ENCODE measurements at regions of chr14 and their contacts with region 1.

Region 1: DNA sequence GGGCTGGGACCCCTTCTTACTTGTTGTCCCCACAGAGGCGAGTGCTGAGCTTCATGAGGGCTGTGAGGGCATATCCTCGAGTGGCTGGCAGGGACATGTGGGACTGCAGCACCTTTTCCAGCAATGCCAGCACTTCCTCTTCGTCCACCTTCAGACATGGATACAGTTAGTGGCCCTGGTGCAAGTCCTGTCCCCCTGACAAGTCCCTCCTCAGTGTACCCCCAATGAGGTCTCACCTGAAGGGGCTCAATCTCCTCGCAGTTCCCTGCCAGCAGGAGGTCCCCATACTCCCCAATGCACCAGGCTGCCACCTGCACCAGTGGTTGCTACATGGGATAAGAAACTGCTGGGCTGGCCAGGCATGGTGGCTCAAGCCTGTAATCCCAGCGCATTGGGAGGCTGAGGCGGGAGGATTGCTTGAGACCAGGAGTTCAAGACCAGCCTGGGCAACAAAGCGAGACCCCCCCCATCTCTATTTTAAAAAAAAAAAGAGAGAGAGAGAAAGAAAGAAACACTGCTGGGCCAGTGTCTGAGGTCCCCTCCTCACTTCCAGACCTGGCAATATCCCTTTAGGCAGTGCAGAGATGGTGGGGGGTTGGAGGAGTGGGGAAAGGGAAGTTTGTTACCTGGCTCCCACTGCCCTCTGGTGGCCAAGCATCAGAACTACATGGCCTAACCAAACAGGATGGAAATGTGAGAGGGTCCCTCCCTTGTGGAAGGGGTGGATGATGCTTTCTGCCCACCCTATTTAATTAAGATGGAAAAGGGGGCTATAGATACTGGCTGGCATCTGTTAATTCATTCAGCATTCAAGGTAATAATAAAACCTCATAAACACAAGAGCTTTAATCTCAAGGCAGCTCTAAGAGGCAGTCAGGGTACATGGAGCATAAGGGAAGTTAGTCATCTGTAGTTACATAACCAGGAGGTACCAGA is 5.1 kb downstream of the AP1G2 start:
- DNase-seq: no peak
- H3K4me3 ChIP-seq: no peak overlapping the region
- H3K27ac ChIP-seq: no peak overlapping the region
- H3K4me1 ChIP-seq: peaks cover 23% of the 10 kb centered on the region
- H3K27me3 ChIP-seq: no peaks in the 10 kb centered on the region
- CTCF ChIP-seq: peak; percentile 73 to 77 (median 76)
- POLR2A ChIP-seq: no peak

Region 2: DNA sequence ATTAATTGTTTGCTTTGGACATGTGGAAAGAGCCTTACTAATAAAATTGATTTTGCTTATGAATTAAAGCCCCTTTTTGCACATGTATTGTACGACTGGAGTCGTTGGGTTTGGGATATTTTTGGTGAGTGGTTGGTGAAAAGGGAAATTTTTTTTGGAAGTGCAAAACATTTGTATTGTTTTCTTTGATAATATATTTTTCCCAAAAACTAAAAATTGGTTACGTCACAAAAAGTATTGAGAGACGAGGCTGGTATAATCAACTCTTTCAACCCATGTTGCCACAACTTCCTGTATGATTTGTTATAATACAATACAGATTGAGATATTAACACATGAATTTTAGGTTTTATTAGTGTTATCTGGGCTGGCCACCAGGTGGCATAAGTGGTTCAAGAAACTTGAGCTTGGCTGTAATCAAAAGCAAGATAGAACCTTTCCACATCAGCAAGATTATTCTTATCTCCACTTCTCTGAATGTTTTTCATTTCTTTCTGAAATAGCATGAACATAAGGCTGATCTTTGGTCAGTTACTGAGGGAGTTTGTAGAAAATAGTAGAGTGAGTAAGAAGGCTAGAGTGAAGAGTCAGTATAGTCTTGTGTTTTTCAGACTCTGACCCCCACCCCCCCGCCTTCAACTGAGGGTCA is 84.3 kb before region 1 on chr14:
- intact Hi-C with region 1: loop called (anchors 1 kb)
- DNase-seq: no peak
- H3K4me3 ChIP-seq: no peak overlapping the region
- H3K27ac ChIP-seq: no peak overlapping the region
- H3K4me1 ChIP-seq: no peaks in the 10 kb centered on the region
- H3K27me3 ChIP-seq: no peaks in the 10 kb centered on the region
- CTCF ChIP-seq: peak; percentile 37 to 73 (median 59)
- POLR2A ChIP-seq: no peak

Region 3: DNA sequence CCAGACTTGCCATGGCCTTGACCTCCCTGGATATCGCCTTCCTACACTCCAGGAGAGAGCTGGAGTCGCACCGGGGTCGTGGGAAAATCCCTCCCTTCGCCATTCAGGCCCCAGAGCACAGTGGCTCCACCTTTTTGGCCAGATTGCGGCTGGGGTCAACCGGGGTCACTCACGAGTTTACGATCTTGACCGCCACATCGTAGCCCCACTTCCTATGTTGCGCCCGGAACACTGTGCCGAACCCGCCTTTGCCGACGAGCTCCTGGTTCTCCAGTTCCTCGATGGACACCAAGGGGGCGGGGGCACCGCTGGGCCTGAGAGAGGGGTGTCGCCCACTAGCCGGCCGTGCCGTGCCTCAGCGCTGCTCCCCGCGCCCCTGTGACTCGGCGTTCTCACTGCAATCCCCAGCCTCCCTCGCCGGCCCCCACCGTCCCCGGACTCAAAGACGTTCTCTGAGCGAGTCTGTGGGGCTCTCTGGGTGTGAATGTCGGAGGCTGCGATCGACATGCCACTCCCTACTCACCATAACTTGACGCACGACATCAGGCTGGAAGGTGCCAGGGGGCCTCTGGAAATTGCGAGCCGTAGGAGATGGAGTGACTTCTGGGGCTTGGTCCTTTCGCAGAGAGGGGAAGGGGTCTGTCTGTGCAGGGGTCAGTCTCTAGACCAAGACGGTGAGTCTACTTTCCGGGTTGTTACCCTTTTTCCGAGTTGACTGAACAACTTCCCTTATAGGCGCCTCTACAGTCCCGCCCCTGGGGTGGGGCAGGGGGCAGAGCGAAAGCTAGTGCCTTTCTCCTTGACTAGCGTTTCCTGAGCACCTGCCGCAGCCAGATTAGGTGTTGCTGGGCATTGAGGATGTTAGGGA is 777.0 kb after region 1 on chr14 and contains the start of gene RIPK3:
- intact Hi-C with region 1: no loop called
- DNase-seq: no peak
- H3K4me3 ChIP-seq: peak within 1 kb of the TSS; percentile 57
- H3K27ac ChIP-seq: peak within 1 kb of the TSS; percentile 52
- H3K4me1 ChIP-seq: peaks cover 37% of the 10 kb centered on the region
- H3K27me3 ChIP-seq: no peaks in the 10 kb centered on the region
- CTCF ChIP-seq: no peak
- POLR2A ChIP-seq: no peak
- total RNA-seq, gene RIPK3: 10.1 TPM

Measured in vagina (tissue), 2 donors.